MCF 10A (cell line): ENCODE measurements at regions of chr10 and their contacts with region 1.

Region 1: GRCh38 chr10:79562135-79562756 is 2.0 kb upstream of the SFTPA2 start:
- DNase-seq: peak; percentile 64
- H3K4me3 Mint-ChIP-seq: no peak overlapping the region
- H3K27ac Mint-ChIP-seq: no peak overlapping the region
- H3K4me1 Mint-ChIP-seq: no peaks in the 10 kb centered on the region
- H3K27me3 Mint-ChIP-seq: peaks cover 37% of the 10 kb centered on the region
- CTCF ChIP-seq: peak; percentile 73

Region 2: DNA sequence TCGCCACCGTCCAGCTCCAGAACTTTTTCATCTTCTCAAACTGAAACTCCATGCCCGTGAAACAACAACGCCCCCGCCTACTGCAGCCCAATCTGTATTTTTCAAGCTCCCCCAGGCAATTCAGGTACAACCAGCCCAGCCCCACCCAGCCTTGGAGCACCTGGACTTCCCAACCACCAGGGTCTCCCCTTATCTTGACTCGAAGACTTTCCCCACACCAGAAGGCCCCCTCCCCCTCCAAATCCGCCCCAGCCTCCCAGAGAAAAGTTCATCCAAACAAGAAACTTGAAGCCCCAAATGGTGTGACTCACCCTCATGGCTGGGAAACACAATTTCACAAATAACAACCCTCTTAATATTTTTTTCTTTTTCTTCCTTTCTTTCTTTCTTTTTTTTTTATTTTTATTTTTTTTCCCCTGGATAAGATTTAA is 127.4 kb before region 1 on chr10:
- CTCF ChIA-PET with region 1: no interaction called
- POLR2A ChIA-PET with region 1: no interaction called
- intact Hi-C with region 1: no loop called
- DNase-seq: peak; percentile 62
- H3K4me3 Mint-ChIP-seq: no peak overlapping the region
- H3K27ac Mint-ChIP-seq: no peak overlapping the region
- H3K4me1 Mint-ChIP-seq: peaks cover 5% of the 10 kb centered on the region
- H3K27me3 Mint-ChIP-seq: no peaks in the 10 kb centered on the region
- CTCF ChIP-seq: no peak

Region 3: GRCh38 chr10:79579361-79579760 is 17.1 kb after region 1 on chr10:
- CTCF ChIA-PET with region 1: interaction called, 12 read pairs
- POLR2A ChIA-PET with region 1: no interaction called
- intact Hi-C with region 1: no loop called
- DNase-seq: no peak
- H3K4me3 Mint-ChIP-seq: no peak overlapping the region
- H3K27ac Mint-ChIP-seq: no peak overlapping the region
- H3K4me1 Mint-ChIP-seq: no peaks in the 10 kb centered on the region
- H3K27me3 Mint-ChIP-seq: peaks cover 60% of the 10 kb centered on the region
- CTCF ChIP-seq: no peak

Region 4: GRCh38 chr10:79608505-79609375 is 46.5 kb after region 1 on chr10:
- CTCF ChIA-PET with region 1: no interaction called
- POLR2A ChIA-PET with region 1: no interaction called
- intact Hi-C with region 1: loop called (anchors 2 kb)
- DNase-seq: peak; percentile 41
- H3K4me3 Mint-ChIP-seq: no peak overlapping the region
- H3K27ac Mint-ChIP-seq: no peak overlapping the region
- H3K4me1 Mint-ChIP-seq: no peaks in the 10 kb centered on the region
- H3K27me3 Mint-ChIP-seq: peaks cover 49% of the 10 kb centered on the region
- CTCF ChIP-seq: peak; percentile 33

Region 5: DNA sequence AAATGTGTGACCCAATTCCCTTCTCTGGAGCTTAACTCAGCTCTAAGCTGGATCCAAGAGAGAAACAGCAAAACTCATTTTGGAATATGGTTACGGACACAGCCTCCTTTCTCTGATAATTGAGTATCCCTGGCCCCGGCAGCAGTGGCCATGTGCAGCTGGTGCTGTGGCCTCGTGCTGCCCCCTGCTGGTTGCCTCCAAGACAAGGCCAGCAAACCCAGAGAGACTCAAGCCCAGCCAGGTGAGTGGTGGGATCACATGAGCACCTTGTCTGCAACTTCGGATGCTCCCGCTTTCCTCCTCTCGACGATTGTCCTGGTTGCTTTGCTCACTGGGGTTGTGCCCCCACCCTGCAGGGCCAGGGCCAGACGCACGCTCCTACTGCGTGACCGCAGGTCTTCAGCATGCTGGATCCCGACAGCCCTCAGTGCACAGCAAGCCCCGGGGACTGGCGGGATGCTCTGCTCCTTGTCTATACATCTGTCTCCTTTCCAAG is 367.2 kb after region 1 on chr10:
- CTCF ChIA-PET with region 1: interaction called, 3 read pairs
- POLR2A ChIA-PET with region 1: no interaction called
- intact Hi-C with region 1: loop called (anchors 1 kb)
- DNase-seq: peak; percentile 74
- H3K4me3 Mint-ChIP-seq: no peak overlapping the region
- H3K27ac Mint-ChIP-seq: no peak overlapping the region
- H3K4me1 Mint-ChIP-seq: peaks cover 14% of the 10 kb centered on the region
- H3K27me3 Mint-ChIP-seq: peaks cover 45% of the 10 kb centered on the region
- CTCF ChIP-seq: peak; percentile 91